ENCODE measurements at regions of chr1 and their contacts with region 1.

Region 1: DNA sequence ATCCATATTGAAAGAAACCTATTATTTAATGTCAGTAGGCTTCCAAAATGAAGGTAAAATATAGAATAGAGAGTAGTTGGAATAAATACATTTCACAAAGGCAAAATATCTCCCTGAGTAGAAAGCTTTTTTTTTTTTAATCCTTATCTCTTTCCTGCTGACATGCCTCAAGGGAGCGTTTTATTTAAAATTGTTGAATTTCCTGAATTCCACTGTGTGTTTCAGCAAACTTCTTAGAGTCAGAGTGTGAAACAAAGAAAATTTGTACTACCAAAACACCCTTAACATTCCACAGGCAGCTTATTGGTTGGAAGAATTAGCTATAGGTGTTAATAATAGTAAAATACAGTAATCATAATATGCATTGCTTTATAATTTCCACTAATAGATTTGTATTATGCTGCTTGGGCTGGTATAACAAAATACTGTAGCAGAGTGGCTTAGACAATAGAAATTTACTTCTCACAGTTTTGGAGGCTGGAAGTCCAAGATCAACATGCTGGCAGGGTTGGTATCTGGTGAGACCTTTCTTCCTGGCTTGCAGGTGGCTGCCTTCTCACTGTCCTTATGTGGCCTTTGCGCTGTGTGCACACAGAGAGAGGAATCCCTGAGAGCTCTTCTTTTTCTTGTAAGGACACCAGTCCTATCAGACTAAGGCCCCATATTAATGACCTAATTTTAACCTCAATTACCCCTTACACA is 468.4 kb upstream of the C1orf87 start:
- DNase-seq: no peak
- H3K4me3 ChIP-seq: no peak overlapping the region
- H3K27ac ChIP-seq: no peak overlapping the region
- H3K4me1 ChIP-seq: no peaks in the 10 kb centered on the region
- H3K27me3 ChIP-seq: no peaks in the 10 kb centered on the region
- CTCF ChIP-seq: no peak

Region 2: DNA sequence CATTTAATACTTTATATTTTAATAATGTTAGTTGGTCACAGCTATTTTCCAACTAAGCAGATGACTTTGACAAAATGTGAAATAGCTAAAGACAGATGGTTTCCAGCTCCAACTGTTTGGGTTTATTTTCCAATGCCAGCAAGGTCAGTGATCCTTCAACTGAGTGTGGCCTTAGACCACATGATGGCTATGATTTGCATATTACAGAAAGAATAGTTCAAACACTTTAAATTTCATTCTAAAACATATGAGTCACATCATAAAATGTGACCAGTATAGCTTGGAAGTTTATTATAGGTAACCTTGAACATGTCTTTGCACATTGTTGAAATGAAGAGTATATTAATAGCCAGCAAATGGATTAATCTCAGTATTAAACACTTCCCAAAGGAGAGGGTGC is 14.4 kb before region 1 on chr1:
- CTCF ChIA-PET with region 1: no interaction called
- dilution Hi-C with region 1: no loop called
- in situ Hi-C with region 1: no loop called
- intact Hi-C with region 1: no loop called
- DNase-seq: no peak
- H3K4me3 ChIP-seq: no peak overlapping the region
- H3K27ac ChIP-seq: no peak overlapping the region
- H3K4me1 ChIP-seq: no peaks in the 10 kb centered on the region
- H3K27me3 ChIP-seq: peaks cover 2% of the 10 kb centered on the region
- CTCF ChIP-seq: no peak

Region 3: DNA sequence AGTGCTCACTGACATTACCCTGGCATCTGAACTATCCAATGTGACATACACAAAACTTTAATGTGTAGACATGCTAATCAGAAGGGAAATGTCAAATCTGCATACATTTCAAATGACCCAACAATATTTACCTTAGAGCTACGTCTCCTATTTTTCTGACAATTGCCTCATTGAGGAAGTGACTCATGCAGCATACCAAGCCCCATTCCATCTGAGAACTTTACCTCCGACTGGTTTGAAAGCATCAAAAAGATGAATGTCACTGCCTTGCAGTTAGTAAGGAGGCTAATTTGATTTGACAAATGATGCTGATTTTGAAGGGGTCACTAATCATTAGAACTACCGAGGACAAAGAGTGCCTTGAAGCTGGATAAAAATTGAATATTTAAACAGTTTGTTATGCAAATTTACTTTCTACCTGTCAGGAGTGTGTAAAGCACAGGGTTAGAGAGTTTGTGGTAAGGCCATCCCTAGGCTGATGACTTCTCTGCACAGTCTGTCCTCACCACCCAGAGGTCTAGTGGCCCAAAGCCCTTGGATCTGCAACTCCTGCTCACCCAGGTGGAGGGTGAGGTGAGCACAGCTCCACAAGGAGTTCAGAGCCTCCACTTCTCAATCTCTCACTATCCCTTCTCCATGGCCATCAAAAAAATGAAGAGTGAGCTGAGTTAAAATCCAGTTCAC is 31.9 kb after region 1 on chr1:
- CTCF ChIA-PET with region 1: interaction called, 14 read pairs
- dilution Hi-C with region 1: no loop called
- in situ Hi-C with region 1: no loop called
- intact Hi-C with region 1: no loop called
- DNase-seq: peak; percentile 74
- H3K4me3 ChIP-seq: no peak overlapping the region
- H3K27ac ChIP-seq: peak overlapping the region; percentile 72
- H3K4me1 ChIP-seq: peaks cover 36% of the 10 kb centered on the region
- H3K27me3 ChIP-seq: no peaks in the 10 kb centered on the region
- CTCF ChIP-seq: no peak